ENCODE measurements at regions of chr1 and their contacts with region 1.

Region 1: DNA sequence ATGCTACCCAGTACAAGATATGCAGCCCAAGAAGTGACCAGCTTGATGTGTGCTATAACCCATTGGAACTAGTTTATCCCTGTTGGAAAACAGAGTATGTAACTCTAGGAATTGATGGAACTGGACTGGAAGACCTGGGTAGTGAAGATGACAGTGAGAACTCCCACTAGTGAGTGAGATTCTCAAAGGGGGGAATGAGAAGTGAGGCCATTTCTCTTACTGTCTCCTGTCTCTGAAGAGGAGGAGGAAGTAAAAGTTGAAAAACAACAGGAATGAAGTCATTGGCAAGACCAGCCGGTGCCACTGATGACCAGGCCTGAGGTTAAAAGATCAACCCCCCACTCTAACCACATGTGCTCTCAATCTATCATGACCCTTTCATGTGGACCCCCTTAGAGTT is 20.9 kb downstream of the PLA2G2F start:
- DNase-seq: no peak
- ATAC-seq: no peak
- H3K4me3 ChIP-seq: no peak overlapping the region
- H3K27ac ChIP-seq: no peak overlapping the region
- H3K4me1 ChIP-seq: peaks cover 0 to 13% (median 0%) of the 10 kb centered on the region in 12 donors
- H3K27me3 ChIP-seq: peaks cover 0 to 8% (median 0%) of the 10 kb centered on the region in 9 donors
- CTCF ChIP-seq: no peak
- POLR2A ChIP-seq: no peak

Region 2: GRCh38 chr1:20110679-20111078 is 49.4 kb before region 1 on chr1:
- intact Hi-C with region 1: loop called in 2 of 10 experiments (anchors 2 to 10 kb)
- DNase-seq: peak in 1 of 5 donors; percentile 29
- ATAC-seq: peak in 3 of 4 donors; percentile 19 to 70 (median 52)
- H3K4me3 ChIP-seq: no peak overlapping the region
- H3K27ac ChIP-seq: peak overlapping the region in 1 of 12 donors; percentile 63
- H3K4me1 ChIP-seq: peaks cover 0 to 9% (median 0%) of the 10 kb centered on the region in 12 donors
- H3K27me3 ChIP-seq: peaks cover 0 to 8% (median 0%) of the 10 kb centered on the region in 9 donors
- CTCF ChIP-seq: no peak
- POLR2A ChIP-seq: no peak